ENCODE measurements at regions of chr13 and their contacts with region 1.

Region 1: DNA sequence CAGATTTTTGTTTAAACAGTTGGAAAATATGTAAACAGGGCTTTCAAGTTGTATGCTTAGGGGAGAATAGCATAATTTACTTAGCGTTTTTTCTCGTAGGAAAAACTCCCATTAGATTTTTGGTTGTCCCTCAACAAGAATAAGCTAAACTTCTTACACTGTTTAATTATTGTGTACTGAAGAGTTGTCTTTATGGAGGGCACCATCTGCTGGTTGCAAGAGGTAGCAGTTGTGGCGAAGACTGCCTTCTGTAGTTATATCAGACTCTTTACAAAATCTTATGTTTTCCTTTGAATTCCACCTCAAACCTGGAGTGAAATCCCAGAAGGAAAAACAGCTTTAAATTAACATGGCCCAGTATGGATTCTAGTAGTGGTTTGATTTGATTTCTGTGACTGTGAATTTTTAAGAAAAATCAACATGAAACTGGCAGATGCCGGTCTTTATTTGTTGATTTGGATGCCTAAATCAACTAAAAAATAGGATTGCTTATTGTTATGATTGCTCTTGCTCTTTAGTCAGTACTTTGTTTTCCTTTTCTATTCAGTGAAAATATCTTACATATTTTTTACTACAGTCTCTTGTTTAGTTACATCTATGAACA is 53.4 kb downstream of the PDS5B start:
- DNase-seq: peak; percentile 62
- H3K4me3 Mint-ChIP-seq: no peak overlapping the region
- H3K27ac Mint-ChIP-seq: no peak overlapping the region
- H3K4me1 Mint-ChIP-seq: peaks cover 19% of the 10 kb centered on the region
- H3K27me3 Mint-ChIP-seq: no peaks in the 10 kb centered on the region

Region 2: GRCh38 chr13:32548837-32549236 is 90.8 kb before region 1 on chr13:
- CTCF ChIA-PET with region 1: no interaction called
- DNase-seq: no peak
- H3K4me3 Mint-ChIP-seq: no peak overlapping the region
- H3K27ac Mint-ChIP-seq: no peak overlapping the region
- H3K4me1 Mint-ChIP-seq: peaks cover 3% of the 10 kb centered on the region
- H3K27me3 Mint-ChIP-seq: peaks cover 8% of the 10 kb centered on the region

Region 3: DNA sequence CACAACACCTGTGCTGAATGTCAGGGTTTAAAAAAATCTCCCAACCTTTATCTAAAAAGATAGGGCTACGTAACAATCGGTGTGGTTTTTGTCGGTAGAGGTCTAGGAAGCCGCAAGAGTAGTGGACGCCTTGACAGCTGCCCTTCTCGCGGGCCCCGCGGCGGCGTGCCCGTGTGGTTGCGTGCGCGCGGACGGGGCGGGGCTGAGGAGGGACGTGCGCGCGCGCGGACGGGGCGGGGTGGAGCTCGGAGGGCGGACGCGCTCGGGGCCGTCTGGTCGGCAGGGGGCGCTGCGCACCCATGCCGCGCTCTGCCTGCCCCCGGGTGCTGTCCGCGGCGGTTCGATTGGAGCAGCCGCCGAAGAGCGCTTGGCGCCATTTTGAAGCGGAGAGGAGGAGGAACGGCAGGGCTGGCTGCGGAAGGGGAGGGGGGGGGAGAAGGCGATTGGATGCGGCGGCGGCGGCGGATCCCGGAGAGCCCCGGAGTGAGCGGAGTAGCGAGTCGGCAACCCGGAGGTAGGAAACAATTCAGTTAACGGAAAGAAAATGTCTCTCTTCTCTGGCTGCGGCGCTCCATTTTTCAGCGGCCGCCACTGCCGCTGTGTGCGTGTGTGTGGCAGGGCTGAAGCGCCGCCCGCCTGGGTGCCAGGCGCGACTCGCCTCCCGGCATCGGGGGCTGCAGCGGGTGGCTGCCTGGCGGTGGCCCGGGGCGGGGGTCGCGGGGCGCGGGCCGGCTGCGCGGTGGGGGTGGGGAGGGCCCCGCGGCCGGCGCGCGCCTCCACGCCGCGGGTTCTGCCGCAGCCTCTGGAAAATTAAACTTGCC is 53.3 kb before region 1 on chr13 and contains the start of gene PDS5B:
- CTCF ChIA-PET with region 1: interaction called, 17 read pairs
- DNase-seq: peak; percentile 95
- H3K4me3 Mint-ChIP-seq: peak within 1 kb of the TSS; percentile 96
- H3K27ac Mint-ChIP-seq: peak within 1 kb of the TSS; percentile 96
- H3K4me1 Mint-ChIP-seq: peaks cover 40% of the 10 kb centered on the region
- H3K27me3 Mint-ChIP-seq: peaks cover 11% of the 10 kb centered on the region

Region 4: GRCh38 chr13:32592082-32592481 is 47.5 kb before region 1 on chr13:
- CTCF ChIA-PET with region 1: interaction called, 17 read pairs
- DNase-seq: no peak
- H3K4me3 Mint-ChIP-seq: no peak overlapping the region
- H3K27ac Mint-ChIP-seq: no peak overlapping the region
- H3K4me1 Mint-ChIP-seq: peaks cover 51% of the 10 kb centered on the region
- H3K27me3 Mint-ChIP-seq: no peaks in the 10 kb centered on the region

Region 5: GRCh38 chr13:32650705-32651311 is 11.2 kb after region 1 on chr13:
- CTCF ChIA-PET with region 1: interaction called, 30 read pairs
- DNase-seq: peak; percentile 69
- H3K4me3 Mint-ChIP-seq: no peak overlapping the region
- H3K27ac Mint-ChIP-seq: no peak overlapping the region
- H3K4me1 Mint-ChIP-seq: peaks cover 27% of the 10 kb centered on the region
- H3K27me3 Mint-ChIP-seq: no peaks in the 10 kb centered on the region

Region 6: GRCh38 chr13:32791545-32792172 is 152.1 kb after region 1 on chr13:
- CTCF ChIA-PET with region 1: no interaction called
- DNase-seq: peak; percentile 78
- H3K4me3 Mint-ChIP-seq: peak overlapping the region; percentile 27
- H3K27ac Mint-ChIP-seq: peak overlapping the region; percentile 96
- H3K4me1 Mint-ChIP-seq: peaks cover 57% of the 10 kb centered on the region
- H3K27me3 Mint-ChIP-seq: no peaks in the 10 kb centered on the region

Region 7: GRCh38 chr13:32804673-32805230 is 165.1 kb after region 1 on chr13:
- CTCF ChIA-PET with region 1: no interaction called
- DNase-seq: no peak
- H3K4me3 Mint-ChIP-seq: no peak overlapping the region
- H3K27ac Mint-ChIP-seq: no peak overlapping the region
- H3K4me1 Mint-ChIP-seq: no peaks in the 10 kb centered on the region
- H3K27me3 Mint-ChIP-seq: peaks cover 10% of the 10 kb centered on the region

Measured in activated naive CD4-positive, alpha-beta T cell treated with anti-CD3 and anti-CD28 coated beads, Interleukin-2, amount 10 ng/mL, durations not matched to agents 7 days and 5 days (primary cell).